ENCODE measurements at regions of chr12 and their contacts with region 1.

Region 1: GRCh38 chr12:11648831-11649702 is at the start of gene ETV6:
- DNase-seq: peak; percentile 68 to 82
- ATAC-seq: peak; percentile 53 to 82 (median 71)
- H3K4me3 ChIP-seq: peak within 1 kb of the TSS; percentile 56 to 94 (median 88)
- H3K27ac ChIP-seq: peak within 1 kb of the TSS; percentile 92 to 99 (median 98)
- H3K4me1 ChIP-seq: peaks cover 6 to 37% (median 30%) of the 10 kb centered on the region in 9 donors
- H3K27me3 ChIP-seq: no peaks in the 10 kb centered on the region
- CTCF ChIP-seq: peak in 1 of 9 donors; percentile 24
- total RNA-seq, gene ETV6: 8.5 to 33.5 (median 15.9) TPM

Region 2: GRCh38 chr12:11661491-11662089 is 12.5 kb after region 1 on chr12:
- intact Hi-C with region 1: no loop called
- DNase-seq: no peak
- ATAC-seq: peak in 3 of 8 donors; percentile 26 to 46 (median 41)
- H3K4me3 ChIP-seq: no peak overlapping the region
- H3K27ac ChIP-seq: peak overlapping the region in 8 of 10 donors; percentile 15 to 88 (median 77)
- H3K4me1 ChIP-seq: peaks cover 2 to 98% (median 81%) of the 10 kb centered on the region in 9 donors
- H3K27me3 ChIP-seq: no peaks in the 10 kb centered on the region
- CTCF ChIP-seq: no peak

Region 3: GRCh38 chr12:11705010-11705409 is 55.9 kb after region 1 on chr12:
- intact Hi-C with region 1: loop called in 4 of 10 experiments (anchors 5 to 10 kb)
- DNase-seq: no peak
- ATAC-seq: peak in 4 of 8 donors; percentile 25 to 60 (median 36)
- H3K4me3 ChIP-seq: no peak overlapping the region
- H3K27ac ChIP-seq: peak overlapping the region in 6 of 10 donors; percentile 31 to 54 (median 46)
- H3K4me1 ChIP-seq: peaks cover 5 to 76% (median 57%) of the 10 kb centered on the region in 9 donors
- H3K27me3 ChIP-seq: no peaks in the 10 kb centered on the region
- CTCF ChIP-seq: no peak

Region 4: GRCh38 chr12:11758510-11759493 is 109.7 kb after region 1 on chr12:
- intact Hi-C with region 1: loop called in 8 of 10 experiments (anchors 2 to 10 kb)
- DNase-seq: peak in 1 of 2 donors; percentile 67
- ATAC-seq: peak; percentile 63 to 83 (median 79)
- H3K4me3 ChIP-seq: peak overlapping the region in 2 of 10 donors; percentile 2 to 5
- H3K27ac ChIP-seq: peak overlapping the region; percentile 72 to 92 (median 88)
- H3K4me1 ChIP-seq: peaks cover 13 to 91% (median 86%) of the 10 kb centered on the region in 9 donors
- H3K27me3 ChIP-seq: no peaks in the 10 kb centered on the region
- CTCF ChIP-seq: no peak

Region 5: DNA sequence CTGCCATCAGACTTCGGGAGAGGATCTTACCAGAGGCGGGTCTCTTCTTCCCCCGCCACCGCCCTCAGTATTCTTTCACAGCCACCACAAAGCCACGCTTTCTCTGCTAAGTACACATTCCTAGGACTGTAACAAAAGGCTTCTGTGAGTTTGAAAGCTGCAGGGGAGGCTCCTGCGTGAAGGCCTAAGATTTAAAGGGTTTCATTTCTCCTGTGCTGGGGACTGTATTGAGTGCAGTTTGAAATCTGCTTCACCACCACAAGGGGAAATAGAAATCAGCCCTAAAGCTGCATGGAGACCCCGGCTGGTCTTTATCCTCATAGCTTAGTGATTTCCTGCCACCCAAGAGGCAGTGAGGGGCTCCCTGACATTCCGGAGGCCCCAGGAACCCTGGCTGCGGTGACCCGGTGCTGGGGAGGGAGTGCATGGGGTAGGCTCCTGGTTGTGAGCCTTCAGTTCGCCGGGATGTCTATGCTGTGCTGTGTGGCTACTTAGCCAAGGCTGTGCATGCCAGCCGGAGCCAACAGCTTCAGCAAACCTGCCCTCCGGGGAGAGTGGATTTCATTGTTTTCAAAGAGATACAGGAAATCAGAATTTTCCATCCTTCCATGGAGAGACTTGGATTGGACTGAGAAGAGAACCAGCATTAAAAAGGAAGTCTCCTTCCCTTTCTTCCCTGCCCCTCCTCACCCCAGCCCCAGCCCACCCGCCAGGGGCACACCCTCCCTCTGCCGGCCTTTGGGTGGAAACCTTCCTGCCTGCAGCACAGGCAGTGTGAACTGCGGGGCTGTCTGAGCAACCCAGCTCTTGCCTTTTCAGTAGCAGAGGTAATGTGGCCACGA is 163.7 kb after region 1 on chr12:
- intact Hi-C with region 1: loop called in 2 of 10 experiments (anchors 5 kb)
- DNase-seq: peak; percentile 39 to 53
- ATAC-seq: peak; percentile 50 to 84 (median 78)
- H3K4me3 ChIP-seq: peak overlapping the region in 7 of 10 donors; percentile 21 to 40 (median 34)
- H3K27ac ChIP-seq: peak overlapping the region; percentile 62 to 91 (median 78)
- H3K4me1 ChIP-seq: peaks cover 24 to 71% (median 52%) of the 10 kb centered on the region in 9 donors
- H3K27me3 ChIP-seq: no peaks in the 10 kb centered on the region
- CTCF ChIP-seq: peak in 6 of 9 donors; percentile 13 to 34 (median 30)

Region 6: GRCh38 chr12:11877869-11878780 is 229.1 kb after region 1 on chr12:
- intact Hi-C with region 1: loop called in 5 of 10 experiments (anchors 5 to 10 kb)
- DNase-seq: peak in 1 of 2 donors; percentile 51
- ATAC-seq: peak; percentile 66 to 85 (median 77)
- H3K4me3 ChIP-seq: no peak overlapping the region
- H3K27ac ChIP-seq: peak overlapping the region in 5 of 10 donors; percentile 6 to 58 (median 41)
- H3K4me1 ChIP-seq: peaks cover 7 to 72% (median 52%) of the 10 kb centered on the region in 9 donors
- H3K27me3 ChIP-seq: no peaks in the 10 kb centered on the region
- CTCF ChIP-seq: no peak

Region 7: DNA sequence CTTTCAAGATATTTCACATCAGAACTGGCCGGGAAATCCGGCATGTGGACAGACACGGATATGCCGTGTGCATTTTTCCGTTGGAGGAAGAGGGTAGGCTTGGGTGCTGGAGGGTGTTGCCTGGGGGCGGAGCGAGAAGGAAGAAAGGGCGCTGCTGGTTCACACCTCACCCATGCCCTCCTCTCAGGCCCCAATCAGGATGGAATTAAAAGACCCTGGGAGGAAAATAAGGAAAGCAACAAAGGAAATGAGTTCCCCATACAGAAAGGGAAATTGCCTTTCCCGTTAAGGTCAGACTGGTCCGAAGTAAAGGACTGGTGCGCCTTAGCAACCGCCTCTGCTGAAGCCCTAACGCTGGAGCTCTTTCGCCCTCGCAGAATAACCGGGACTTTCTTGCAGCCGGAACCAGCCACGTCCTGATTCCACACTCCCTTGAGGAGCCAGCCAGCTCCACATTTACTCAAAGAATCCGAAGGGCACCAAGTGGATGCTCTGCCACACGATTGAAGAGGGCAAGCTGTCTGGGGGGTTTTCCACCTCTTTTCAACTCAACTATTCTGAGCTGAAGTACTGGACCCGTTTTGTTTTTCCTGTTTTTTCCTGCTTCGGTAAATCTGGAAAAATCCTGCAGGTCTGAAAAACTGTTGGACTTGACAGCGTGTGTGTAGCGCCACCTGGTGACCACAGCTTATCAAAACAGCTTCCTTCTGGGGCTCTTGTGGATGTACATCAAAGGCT is 384.0 kb after region 1 on chr12:
- intact Hi-C with region 1: loop called in 1 of 10 experiments (anchors 5 kb)
- DNase-seq: peak; percentile 31 to 82
- ATAC-seq: peak; percentile 75 to 91 (median 86)
- H3K4me3 ChIP-seq: peak overlapping the region; percentile 5 to 57 (median 48)
- H3K27ac ChIP-seq: peak overlapping the region in 9 of 10 donors; percentile 5 to 86 (median 77)
- H3K4me1 ChIP-seq: peaks cover 0 to 19% (median 9%) of the 10 kb centered on the region in 9 donors
- H3K27me3 ChIP-seq: peaks cover 0 to under 1% (median 0%) of the 10 kb centered on the region in 7 donors
- CTCF ChIP-seq: peak; percentile 67 to 95 (median 89)